K562 (cell line): ENCODE measurements at regions of chr12 and their contacts with region 1.

Region 1: DNA sequence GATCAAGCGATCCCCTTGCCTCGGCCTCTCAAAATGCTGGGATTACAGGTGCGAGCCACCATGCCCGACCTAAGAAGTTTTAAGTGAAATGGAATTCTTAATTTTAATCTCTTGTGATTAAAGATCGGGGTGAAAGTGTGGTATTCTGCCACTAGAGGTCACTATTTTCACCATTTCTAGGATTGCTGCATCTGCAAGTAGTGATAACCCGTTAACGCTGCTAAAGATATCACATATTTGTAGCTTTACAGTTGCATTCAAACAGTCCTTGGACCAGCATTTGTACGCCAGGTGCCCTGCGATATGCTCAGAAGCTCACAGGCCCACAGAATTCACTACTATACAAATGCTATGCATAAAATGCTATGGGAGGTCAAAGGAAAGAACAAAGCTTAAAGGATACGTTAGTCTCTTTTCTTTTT is 19.3 kb downstream of the CCDC62 start:
- DNase-seq: peak; percentile 70 to 72 (median 70)
- ATAC-seq: peak; percentile 85
- H3K4me3 ChIP-seq: no peak overlapping the region
- H3K27ac ChIP-seq: no peak overlapping the region
- H3K4me1 ChIP-seq: peaks cover 4 to 5% of the 10 kb centered on the region in 2 experiments; a peak in 2 of 5 replicates
- H3K27me3 ChIP-seq: no peaks in the 10 kb centered on the region
- CTCF ChIP-seq: peak; percentile 56 to 86 (median 82); a peak in 5 of 6 replicates
- EP300 ChIP-seq: peak; percentile 57; the same call in 1 of the 2 replicates
- POLR2A ChIP-seq: no peak
- RAD21 ChIP-seq: peak; percentile 48 to 80; a peak in 3 of 4 replicates

Region 2: GRCh38 chr12:122642009-122642408 is 151.7 kb before region 1 on chr12:
- CTCF ChIA-PET with region 1: no interaction called
- POLR2A ChIA-PET with region 1: no interaction called
- in situ Hi-C with region 1: no loop called
- intact Hi-C with region 1: loop called (anchors 1 kb)
- DNase-seq: no peak
- ATAC-seq: no peak
- H3K4me3 ChIP-seq: no peak overlapping the region
- H3K27ac ChIP-seq: no peak overlapping the region
- H3K4me1 ChIP-seq: peaks cover 0 to 8% of the 10 kb centered on the region in 2 experiments; a peak in 2 of 5 replicates
- H3K27me3 ChIP-seq: no peaks in the 10 kb centered on the region
- CTCF ChIP-seq: no peak
- EP300 ChIP-seq: no peak
- POLR2A ChIP-seq: no peak
- RAD21 ChIP-seq: no peak

Region 3: DNA sequence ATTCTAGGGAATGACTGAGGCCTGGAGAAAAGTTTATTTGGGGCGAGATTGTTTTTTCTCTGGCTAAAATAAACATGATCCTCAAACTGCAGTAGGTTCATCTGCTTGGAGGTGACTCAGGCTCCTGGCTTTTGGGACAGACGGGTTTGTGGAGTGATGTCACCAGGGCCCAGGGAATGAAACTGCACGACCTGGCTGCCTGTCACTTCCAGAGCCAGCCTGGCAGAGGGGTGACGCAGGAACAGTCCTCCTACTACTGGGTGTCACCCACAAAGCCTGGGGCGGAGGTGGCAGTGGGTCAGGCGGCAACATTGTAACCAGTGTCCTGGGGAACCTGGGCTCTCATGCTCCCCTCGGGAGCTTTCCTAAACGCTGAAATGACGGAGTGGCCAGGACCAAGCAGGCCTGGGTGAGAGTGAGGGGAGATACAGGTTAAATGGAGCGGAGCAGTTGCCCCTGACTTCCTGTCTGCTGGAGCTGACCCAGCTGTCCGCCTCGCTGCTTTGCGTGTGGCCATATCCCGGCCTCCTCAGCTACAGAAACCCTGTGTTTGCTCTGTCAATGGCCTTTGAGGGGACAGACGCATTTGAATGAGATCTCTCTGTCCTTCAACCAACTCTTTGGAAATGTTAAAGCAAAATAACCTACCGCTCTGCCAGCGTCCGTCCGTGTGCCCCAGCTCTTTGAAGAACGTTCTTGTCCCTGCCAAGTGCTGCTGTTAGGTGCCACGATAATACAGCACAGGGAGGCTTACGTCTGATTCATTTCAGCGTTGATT is 48.0 kb after region 1 on chr12:
- CTCF ChIA-PET with region 1: no interaction called
- POLR2A ChIA-PET with region 1: no interaction called
- in situ Hi-C with region 1: no loop called
- intact Hi-C with region 1: loop called (anchors 10 kb)
- DNase-seq: no peak
- ATAC-seq: no peak
- H3K4me3 ChIP-seq: no peak overlapping the region
- H3K27ac ChIP-seq: no peak overlapping the region
- H3K4me1 ChIP-seq: peaks cover 11 to 51% of the 10 kb centered on the region in 2 experiments
- H3K27me3 ChIP-seq: no peaks in the 10 kb centered on the region
- CTCF ChIP-seq: no peak
- EP300 ChIP-seq: no peak
- POLR2A ChIP-seq: no peak
- RAD21 ChIP-seq: no peak

Region 4: GRCh38 chr12:122958198-122958888 is 164.6 kb after region 1 on chr12:
- CTCF ChIA-PET with region 1: interaction called, 4 read pairs
- POLR2A ChIA-PET with region 1: no interaction called
- in situ Hi-C with region 1: loop called (anchors 5 kb)
- intact Hi-C with region 1: loop called (anchors 5 kb)
- DNase-seq: no peak
- ATAC-seq: no peak
- H3K4me3 ChIP-seq: no peak overlapping the region
- H3K27ac ChIP-seq: no peak overlapping the region
- H3K4me1 ChIP-seq: peaks cover 13 to 23% of the 10 kb centered on the region in 2 experiments
- H3K27me3 ChIP-seq: no peaks in the 10 kb centered on the region
- CTCF ChIP-seq: no peak
- EP300 ChIP-seq: no peak
- POLR2A ChIP-seq: no peak
- RAD21 ChIP-seq: no peak